Activated CD4-positive, alpha-beta memory T cell treated with anti-CD3 and anti-CD28 coated beads for 36 hours (primary cell): ENCODE measurements at regions of chr5 and their contacts with region 1.

Region 1: GRCh38 chr5:72611118-72611730 is 104.0 kb upstream of the ZNF366 start:
- DNase-seq: peak; percentile 54
- H3K4me3 Mint-ChIP-seq: no peak overlapping the region
- H3K27ac Mint-ChIP-seq: no peak overlapping the region
- H3K4me1 Mint-ChIP-seq: no peaks in the 10 kb centered on the region
- H3K27me3 Mint-ChIP-seq: peaks cover 7% of the 10 kb centered on the region

Region 2: DNA sequence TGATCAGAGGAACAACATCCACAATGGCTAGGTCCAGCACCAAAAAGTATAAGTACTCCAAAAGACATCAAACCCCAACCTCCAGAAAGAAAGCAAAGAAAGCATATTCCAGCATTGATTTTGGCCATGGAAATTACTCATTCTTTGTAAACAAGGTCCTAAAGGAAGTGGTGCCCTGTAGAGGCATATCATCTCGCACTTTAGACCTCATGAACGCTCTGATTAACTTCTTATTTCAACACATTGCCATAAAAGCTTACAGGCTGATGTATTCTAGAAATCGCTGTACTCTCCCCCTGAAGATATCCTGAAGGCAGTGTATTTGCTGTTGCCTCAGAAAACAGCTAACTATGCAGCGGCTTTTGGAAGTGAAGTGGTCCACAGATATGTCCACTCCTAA is 122.6 kb after region 1 on chr5:
- CTCF ChIA-PET with region 1: no interaction called
- POLR2A ChIA-PET with region 1: no interaction called
- intact Hi-C with region 1: loop called (anchors 10 kb)
- DNase-seq: no peak
- H3K4me3 Mint-ChIP-seq: no peak overlapping the region
- H3K27ac Mint-ChIP-seq: no peak overlapping the region
- H3K4me1 Mint-ChIP-seq: no peaks in the 10 kb centered on the region
- H3K27me3 Mint-ChIP-seq: peaks cover 1% of the 10 kb centered on the region

Region 3: DNA sequence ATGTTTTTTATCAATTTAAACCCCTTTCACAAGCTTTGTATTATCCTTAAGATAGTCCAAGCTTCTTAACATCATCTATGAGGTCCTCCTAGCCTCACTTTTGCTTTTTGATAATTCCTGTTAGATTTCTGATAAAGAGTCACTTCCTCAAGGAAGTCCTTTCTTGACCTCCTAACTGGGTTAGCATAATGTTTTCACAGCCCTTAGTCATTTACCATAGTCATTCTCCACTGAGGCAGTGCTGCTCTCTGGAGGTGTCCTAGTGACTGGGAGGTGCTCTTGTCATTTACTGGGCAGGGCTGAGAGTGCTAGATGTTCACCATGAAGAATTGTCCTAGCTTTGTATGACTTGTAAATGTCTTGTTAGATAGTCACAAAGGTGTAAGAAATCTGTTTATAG is 231.6 kb after region 1 on chr5:
- CTCF ChIA-PET with region 1: interaction called, 3 read pairs
- POLR2A ChIA-PET with region 1: no interaction called
- intact Hi-C with region 1: loop called (anchors 1 kb)
- DNase-seq: peak; percentile 30
- H3K4me3 Mint-ChIP-seq: no peak overlapping the region
- H3K27ac Mint-ChIP-seq: no peak overlapping the region
- H3K4me1 Mint-ChIP-seq: peaks cover 22% of the 10 kb centered on the region
- H3K27me3 Mint-ChIP-seq: no peaks in the 10 kb centered on the region

Region 4: GRCh38 chr5:72847989-72848473 is 236.8 kb after region 1 on chr5:
- CTCF ChIA-PET with region 1: interaction called, 14 read pairs
- POLR2A ChIA-PET with region 1: no interaction called
- intact Hi-C with region 1: loop called (anchors 1 kb)
- DNase-seq: peak; percentile 91
- H3K4me3 Mint-ChIP-seq: peak overlapping the region; percentile 99
- H3K27ac Mint-ChIP-seq: peak overlapping the region; percentile 98
- H3K4me1 Mint-ChIP-seq: peaks cover 40% of the 10 kb centered on the region
- H3K27me3 Mint-ChIP-seq: no peaks in the 10 kb centered on the region